Heart right ventricle (tissue), 16 donors: ENCODE measurements at regions of chr9 and their contacts with region 1.

Region 1: GRCh38 chr9:70031141-70031545 is 12.5 kb upstream of the MAMDC2 start:
- DNase-seq: no peak
- ATAC-seq: no peak
- H3K4me3 ChIP-seq: no peak overlapping the region
- H3K27ac ChIP-seq: no peak overlapping the region
- H3K4me1 ChIP-seq: no peaks in the 10 kb centered on the region
- H3K27me3 ChIP-seq: no peaks in the 10 kb centered on the region
- CTCF ChIP-seq: no peak

Region 2: GRCh38 chr9:69861005-69861404 is 170.1 kb before region 1 on chr9:
- intact Hi-C with region 1: no loop called
- DNase-seq: no peak
- ATAC-seq: no peak
- H3K4me3 ChIP-seq: no peak overlapping the region
- H3K27ac ChIP-seq: no peak overlapping the region
- H3K4me1 ChIP-seq: no peaks in the 10 kb centered on the region
- H3K27me3 ChIP-seq: peaks cover 0 to 6% (median 0%) of the 10 kb centered on the region in 7 donors
- CTCF ChIP-seq: no peak

Region 3: GRCh38 chr9:69996967-69997366 is 34.2 kb before region 1 on chr9:
- intact Hi-C with region 1: loop called in 1 of 10 experiments (anchors 1 kb)
- DNase-seq: peak in 1 of 2 donors; percentile 9
- ATAC-seq: peak in 7 of 8 donors; percentile 81 to 97 (median 86)
- H3K4me3 ChIP-seq: no peak overlapping the region
- H3K27ac ChIP-seq: peak overlapping the region in 9 of 10 donors; percentile 14 to 68 (median 45)
- H3K4me1 ChIP-seq: peaks cover 0 to 23% (median 6%) of the 10 kb centered on the region in 9 donors
- H3K27me3 ChIP-seq: no peaks in the 10 kb centered on the region
- CTCF ChIP-seq: no peak

Region 4: DNA sequence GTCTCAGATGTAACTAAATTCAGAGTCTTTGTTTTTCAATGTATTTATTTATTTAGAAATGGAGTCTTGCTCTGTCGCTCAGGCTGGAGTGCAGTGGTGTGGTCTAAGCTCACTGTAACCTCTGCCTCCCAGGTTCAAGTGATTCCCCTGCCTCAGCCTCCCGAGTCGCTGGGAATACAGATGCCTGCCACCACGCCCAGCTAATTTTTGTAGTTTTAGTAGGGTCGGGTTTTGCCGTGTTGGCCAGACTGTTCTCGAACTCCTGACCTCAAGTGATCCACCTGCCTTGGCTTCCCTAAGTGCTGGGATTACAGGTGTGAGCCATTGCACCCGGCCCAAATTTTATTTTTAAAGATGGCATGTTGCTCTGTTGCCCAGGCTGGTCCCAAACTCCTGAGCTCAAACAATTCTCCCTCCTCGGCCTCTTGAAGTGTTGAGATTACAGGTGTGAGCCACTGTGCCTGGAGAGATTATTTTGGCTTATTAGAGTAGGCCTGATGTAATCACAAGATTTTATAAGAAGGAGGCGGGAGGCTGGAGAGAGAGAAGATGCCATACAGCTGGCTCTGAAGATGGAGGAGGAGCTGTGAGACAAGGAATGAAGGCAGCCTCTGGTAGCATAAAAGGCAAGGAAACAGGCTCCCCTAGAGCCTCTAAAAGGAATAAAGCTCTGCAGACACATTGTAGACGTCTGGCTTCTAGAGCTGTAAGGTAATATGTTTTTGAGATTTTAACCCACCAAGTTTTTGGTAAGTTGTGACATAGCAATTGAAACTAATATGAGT is 396.2 kb after region 1 on chr9:
- intact Hi-C with region 1: no loop called
- DNase-seq: no peak
- ATAC-seq: peak in 2 of 8 donors; percentile 32 to 40
- H3K4me3 ChIP-seq: no peak overlapping the region
- H3K27ac ChIP-seq: no peak overlapping the region
- H3K4me1 ChIP-seq: peaks cover under 1 to 14% (median 6%) of the 10 kb centered on the region in 9 donors
- H3K27me3 ChIP-seq: no peaks in the 10 kb centered on the region
- CTCF ChIP-seq: no peak

Region 5: GRCh38 chr9:72006501-72006900 is 1975.4 kb after region 1 on chr9:
- intact Hi-C with region 1: no loop called
- DNase-seq: no peak
- ATAC-seq: no peak
- H3K4me3 ChIP-seq: no peak overlapping the region
- H3K27ac ChIP-seq: no peak overlapping the region
- H3K4me1 ChIP-seq: no peaks in the 10 kb centered on the region
- H3K27me3 ChIP-seq: no peaks in the 10 kb centered on the region
- CTCF ChIP-seq: no peak